Posterior vena cava (tissue), 2 donors: ENCODE measurements at regions of chr2 and their contacts with region 1.

Region 1: DNA sequence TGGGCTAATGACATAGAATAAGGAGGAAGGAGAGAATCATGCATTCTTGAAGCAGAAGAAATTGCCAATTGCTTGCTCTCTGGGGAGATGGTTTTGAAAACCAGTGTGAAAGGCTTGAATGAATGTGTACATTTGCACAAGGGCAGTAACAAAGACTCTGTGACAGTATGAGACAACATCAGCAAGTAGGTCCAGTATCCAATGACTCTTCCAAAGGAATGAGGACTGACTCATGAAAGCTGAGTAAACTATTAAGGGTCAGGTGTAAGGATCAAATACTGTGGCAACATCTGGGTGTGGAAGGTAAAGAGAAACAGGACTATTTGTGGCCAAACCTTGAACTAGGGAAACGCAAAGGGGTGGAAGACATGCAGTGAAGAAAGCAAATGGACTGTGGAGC is 886.0 kb upstream of the CHAC2 start:
- DNase-seq: no peak

Region 2: GRCh38 chr2:52904355-52904891 is 22.8 kb after region 1 on chr2:
- intact Hi-C with region 1: loop called in 1 of 2 experiments (anchors 1 kb)
- DNase-seq: no peak